ENCODE measurements at regions of chr3 and their contacts with region 1.

Region 1: DNA sequence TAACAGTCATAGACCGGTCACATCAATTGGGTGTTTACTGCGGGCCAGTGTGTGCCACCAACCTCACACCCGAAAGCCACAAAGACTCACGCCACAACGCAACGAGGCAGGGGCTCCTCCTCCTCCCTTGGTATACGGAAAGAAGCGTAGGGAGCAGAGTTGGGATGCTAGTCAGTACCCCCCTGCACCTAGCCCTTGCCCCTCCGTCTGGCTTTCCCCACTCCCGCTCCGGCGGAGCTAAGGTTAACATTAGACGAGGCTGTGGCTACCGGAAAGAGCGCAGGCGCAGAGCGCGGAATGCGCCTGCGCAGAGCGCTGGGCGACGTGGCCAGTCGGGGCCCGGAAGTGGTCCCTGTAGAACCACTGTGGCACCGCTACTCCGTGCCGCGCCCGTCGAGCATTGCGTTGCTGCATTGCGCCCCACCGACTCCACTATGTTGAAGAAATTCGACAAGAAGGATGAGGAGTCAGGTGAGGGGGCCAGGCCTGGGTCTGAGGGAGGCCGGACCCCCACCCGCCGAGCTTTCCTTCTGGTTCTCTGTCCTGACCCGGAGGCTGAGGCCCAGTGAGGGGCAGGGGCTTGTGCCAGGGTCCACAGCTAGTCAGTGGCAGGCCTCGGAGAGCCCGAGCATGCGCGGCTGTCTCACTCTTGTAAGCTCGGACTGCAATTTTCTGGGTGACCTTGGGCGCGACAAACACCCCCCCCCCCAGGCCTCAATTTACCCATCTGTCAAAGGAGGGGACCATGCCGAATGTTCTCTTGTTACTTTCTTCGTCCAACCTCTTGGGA is at the start of gene COPG1:
- DNase-seq: peak; percentile 81 to 89
- ATAC-seq: peak; percentile 88
- total RNA-seq, gene COPG1: 240 to 307 TPM

Region 2: DNA sequence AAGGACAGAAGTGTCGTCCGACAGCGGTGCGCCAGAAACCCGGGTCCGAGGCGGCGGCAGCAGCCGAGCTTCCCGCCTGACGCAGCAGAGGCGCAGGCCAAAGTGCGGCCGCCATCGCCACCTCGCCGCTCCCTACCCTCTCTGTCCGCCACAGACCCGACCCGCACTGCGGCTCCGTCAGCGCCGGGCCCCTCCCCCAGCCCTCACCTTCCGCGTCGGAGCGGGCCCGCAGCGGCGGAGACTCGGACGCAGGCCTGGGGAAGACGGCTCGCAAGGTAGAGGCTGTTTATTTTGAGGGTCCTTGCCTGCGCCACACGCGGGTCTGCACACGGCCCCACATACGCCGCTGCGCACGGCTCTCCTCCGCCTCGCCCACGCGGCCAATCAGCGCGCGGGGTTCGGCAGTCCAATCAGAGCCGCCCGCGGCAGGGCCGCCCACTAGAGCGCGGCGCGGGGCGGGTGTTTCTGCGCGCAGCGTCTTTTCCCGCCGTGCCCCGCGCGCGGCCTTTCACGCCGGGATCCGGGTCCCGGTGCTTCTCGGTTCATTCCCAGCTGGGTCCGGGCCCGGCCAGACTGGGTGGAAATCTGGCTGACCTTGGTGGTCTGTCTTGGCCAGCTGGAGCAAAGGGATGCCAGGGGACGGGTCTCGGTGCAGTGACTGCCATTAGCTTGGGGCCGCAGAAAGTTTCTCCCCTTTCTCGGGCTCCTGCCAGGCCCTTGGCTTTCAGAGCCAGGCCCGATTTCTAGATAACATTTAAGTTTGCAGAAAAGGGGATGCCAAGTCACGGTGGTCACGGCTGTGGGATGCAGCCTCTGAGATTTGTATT is 65.7 kb before region 1 on chr3 and contains the start of gene CNBP:
- intact Hi-C with region 1: loop called in 1 of 2 experiments (anchors 5 kb)
- DNase-seq: peak; percentile 92 to 94
- ATAC-seq: peak; percentile 90
- total RNA-seq, gene CNBP: 205 to 247 TPM

Region 3: GRCh38 chr3:129295286-129295685 is 45.8 kb after region 1 on chr3:
- intact Hi-C with region 1: no loop called
- DNase-seq: no peak
- ATAC-seq: no peak

Region 4: GRCh38 chr3:129305592-129306091 is 56.2 kb after region 1 on chr3:
- intact Hi-C with region 1: no loop called
- DNase-seq: peak; percentile 52 to 76
- ATAC-seq: peak; percentile 37